GM12878 (cell line): ENCODE measurements at regions of chr12 and their contacts with region 1.

Region 1: GRCh38 chr12:111444925-111445725 is 39.4 kb downstream of the SH2B3 start:
- DNase-seq: peak; percentile 94
- ATAC-seq: peak; percentile 91
- H3K4me3 ChIP-seq: peak overlapping the region; percentile 59; the same call in 1 of the 2 replicates
- H3K27ac ChIP-seq: peak overlapping the region; percentile 95
- H3K4me1 ChIP-seq: peaks cover 88% of the 10 kb centered on the region
- H3K27me3 ChIP-seq: no peaks in the 10 kb centered on the region
- CTCF ChIP-seq: peak in 1 of 3 experiments; percentile 5; a peak in 1 of 6 replicates
- EP300 ChIP-seq: peak; percentile 92 to 94
- POLR2A ChIP-seq: peak; percentile 74
- RAD21 ChIP-seq: peak; percentile 13; the same call in 1 of the 2 replicates

Region 2: GRCh38 chr12:110606253-110606611 is 838.9 kb before region 1 on chr12:
- CTCF ChIA-PET with region 1: no interaction called
- POLR2A ChIA-PET with region 1: interaction called, 10 read pairs
- RAD21 ChIA-PET with region 1: interaction called, 3 read pairs
- SMC1A ChIA-PET with region 1: no interaction called
- in situ Hi-C with region 1: no loop called
- intact Hi-C with region 1: no loop called
- DNase-seq: no peak
- ATAC-seq: peak; percentile 57
- H3K4me3 ChIP-seq: peak overlapping the region; percentile 63
- H3K27ac ChIP-seq: peak overlapping the region; percentile 86
- H3K4me1 ChIP-seq: peaks cover 20% of the 10 kb centered on the region
- H3K27me3 ChIP-seq: no peaks in the 10 kb centered on the region
- CTCF ChIP-seq: no peak
- EP300 ChIP-seq: no peak
- POLR2A ChIP-seq: no peak
- RAD21 ChIP-seq: no peak

Region 3: GRCh38 chr12:110846615-110847566 is 598.2 kb before region 1 on chr12 and contains the start of gene CCDC63:
- CTCF ChIA-PET with region 1: no interaction called
- POLR2A ChIA-PET with region 1: no interaction called
- RAD21 ChIA-PET with region 1: no interaction called
- SMC1A ChIA-PET with region 1: no interaction called
- in situ Hi-C with region 1: no loop called
- intact Hi-C with region 1: no loop called
- DNase-seq: no peak
- ATAC-seq: peak; percentile 72
- H3K4me3 ChIP-seq: peak within 1 kb of the TSS; percentile 36; the same call in 1 of the 2 replicates
- H3K27ac ChIP-seq: no peak within 1 kb of the TSS
- H3K4me1 ChIP-seq: no peaks in the 10 kb centered on the region
- H3K27me3 ChIP-seq: peaks cover 5 to 13% of the 10 kb centered on the region in 2 experiments
- CTCF ChIP-seq: peak; percentile 33 to 44 (median 42); a peak in 3 of 6 replicates
- EP300 ChIP-seq: no peak
- POLR2A ChIP-seq: no peak
- RAD21 ChIP-seq: no peak
- polyA plus RNA-seq, gene CCDC63: not detected

Region 4: GRCh38 chr12:111405149-111405860 is 39.8 kb before region 1 on chr12:
- CTCF ChIA-PET with region 1: interaction called, 1,117 read pairs
- POLR2A ChIA-PET with region 1: interaction called, 71 read pairs
- RAD21 ChIA-PET with region 1: interaction called, 804 read pairs
- SMC1A ChIA-PET with region 1: interaction called, 605 read pairs
- in situ Hi-C with region 1: loop called (anchors 5 kb)
- intact Hi-C with region 1: loop called (anchors 1 kb)
- DNase-seq: peak; percentile 86
- ATAC-seq: peak; percentile 70
- H3K4me3 ChIP-seq: peak overlapping the region; percentile 86
- H3K27ac ChIP-seq: peak overlapping the region; percentile 91
- H3K4me1 ChIP-seq: peaks cover 49% of the 10 kb centered on the region
- H3K27me3 ChIP-seq: no peaks in the 10 kb centered on the region
- CTCF ChIP-seq: peak; percentile 60 to 70 (median 64); a peak in 5 of 6 replicates
- EP300 ChIP-seq: no peak
- POLR2A ChIP-seq: peak; percentile 85
- RAD21 ChIP-seq: no peak

Region 5: GRCh38 chr12:111434680-111435338 is 10.3 kb before region 1 on chr12:
- CTCF ChIA-PET with region 1: interaction called, 160 read pairs
- POLR2A ChIA-PET with region 1: interaction called, 80 read pairs
- RAD21 ChIA-PET with region 1: interaction called, 103 read pairs
- SMC1A ChIA-PET with region 1: interaction called, 86 read pairs
- in situ Hi-C with region 1: no loop called
- intact Hi-C with region 1: loop called (anchors 1 kb)
- DNase-seq: peak; percentile 84
- ATAC-seq: peak; percentile 72
- H3K4me3 ChIP-seq: peak overlapping the region; percentile 65
- H3K27ac ChIP-seq: peak overlapping the region; percentile 95
- H3K4me1 ChIP-seq: peaks cover 91% of the 10 kb centered on the region
- H3K27me3 ChIP-seq: no peaks in the 10 kb centered on the region
- CTCF ChIP-seq: no peak
- EP300 ChIP-seq: peak; percentile 47 to 60; a peak in 3 of 4 replicates
- POLR2A ChIP-seq: peak; percentile 67
- RAD21 ChIP-seq: no peak

Region 6: GRCh38 chr12:113221181-113221997 is 1776.3 kb after region 1 on chr12 and contains the start of gene TPCN1:
- CTCF ChIA-PET with region 1: no interaction called
- POLR2A ChIA-PET with region 1: no interaction called
- RAD21 ChIA-PET with region 1: no interaction called
- SMC1A ChIA-PET with region 1: no interaction called
- in situ Hi-C with region 1: loop called (anchors 25 kb)
- intact Hi-C with region 1: no loop called
- DNase-seq: peak; percentile 100
- ATAC-seq: peak; percentile 89
- H3K4me3 ChIP-seq: peak within 1 kb of the TSS; percentile 89
- H3K27ac ChIP-seq: peak within 1 kb of the TSS; percentile 85
- H3K4me1 ChIP-seq: peaks cover 19% of the 10 kb centered on the region
- H3K27me3 ChIP-seq: no peaks in the 10 kb centered on the region
- CTCF ChIP-seq: no peak
- EP300 ChIP-seq: no peak
- POLR2A ChIP-seq: peak; percentile 99
- RAD21 ChIP-seq: no peak
- polyA plus RNA-seq, gene TPCN1: 0.79 to 1.0 TPM